T-cell (primary cell): ENCODE measurements at regions of chr13 and their contacts with region 1.

Region 1: GRCh38 chr13:40961826-40962225 is 57.3 kb downstream of the ELF1 start:
- DNase-seq: no peak
- ATAC-seq: peak in 2 of 4 experiments; percentile 6 to 26
- H3K4me3 ChIP-seq: no peak overlapping the region
- H3K4me3 Mint-ChIP-seq: peak overlapping the region; percentile 4 to 67 (median 40)
- H3K27ac ChIP-seq: no peak overlapping the region
- H3K27ac Mint-ChIP-seq: peak overlapping the region; percentile 52 to 76
- H3K4me1 ChIP-seq: peaks cover 28 to 46% of the 10 kb centered on the region in 2 experiments
- H3K4me1 Mint-ChIP-seq: peaks cover 83 to 90% (median 87%) of the 10 kb centered on the region in 3 donors
- H3K27me3 ChIP-seq: no peaks in the 10 kb centered on the region
- H3K27me3 Mint-ChIP-seq: no peaks in the 10 kb centered on the region

Region 2: GRCh38 chr13:39760521-39760920 is 1201.3 kb before region 1 on chr13:
- CTCF ChIA-PET with region 1: no interaction called
- POLR2A ChIA-PET with region 1: interaction called in 1 of 2 experiments, 19 read pairs
- DNase-seq: no peak
- ATAC-seq: no peak
- H3K4me3 ChIP-seq: no peak overlapping the region
- H3K4me3 Mint-ChIP-seq: no peak overlapping the region
- H3K27ac ChIP-seq: no peak overlapping the region
- H3K27ac Mint-ChIP-seq: no peak overlapping the region
- H3K4me1 ChIP-seq: no peaks in the 10 kb centered on the region
- H3K4me1 Mint-ChIP-seq: no peaks in the 10 kb centered on the region
- H3K27me3 ChIP-seq: no peaks in the 10 kb centered on the region
- H3K27me3 Mint-ChIP-seq: no peaks in the 10 kb centered on the region

Region 3: DNA sequence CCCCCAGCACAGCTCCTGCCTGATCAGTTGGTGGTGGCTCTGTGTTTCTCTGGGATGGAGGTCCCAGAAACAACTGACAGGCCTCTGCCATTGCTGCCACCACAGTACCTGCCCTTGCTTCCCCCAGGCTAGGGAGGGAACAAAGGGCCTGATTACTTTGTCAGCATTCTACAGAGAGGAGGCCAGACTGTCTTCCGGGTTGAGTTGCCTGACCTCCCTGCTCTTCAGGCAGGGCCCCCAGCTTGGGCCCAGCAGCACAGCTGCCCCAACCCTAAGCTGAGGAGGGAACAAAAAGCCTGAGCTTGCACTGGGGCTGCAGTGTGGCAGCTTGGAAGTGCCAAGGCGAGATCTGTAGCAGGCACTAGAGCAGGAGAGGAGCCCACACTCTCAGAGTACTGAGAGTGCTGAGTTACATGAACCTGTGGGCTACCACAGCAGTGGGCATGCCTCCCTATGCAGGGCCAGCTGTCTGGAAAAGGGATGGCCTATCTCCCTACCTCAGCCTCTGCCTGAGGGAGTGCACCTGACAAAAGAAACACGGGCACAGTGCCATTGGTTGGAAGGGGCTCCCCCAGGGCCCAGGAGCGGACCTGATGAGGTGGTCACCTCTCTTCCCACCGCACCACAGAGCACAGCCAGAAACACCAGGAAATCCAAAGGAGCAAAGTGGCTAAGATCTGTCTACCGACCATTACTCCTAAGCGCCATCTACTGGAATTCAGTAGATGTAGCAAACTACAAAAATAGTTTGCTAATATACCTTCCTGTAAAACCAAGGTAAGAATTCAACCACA is 148.0 kb before region 1 on chr13:
- CTCF ChIA-PET with region 1: no interaction called
- POLR2A ChIA-PET with region 1: no interaction called
- DNase-seq: peak in 1 of 35 experiments; percentile 39
- ATAC-seq: peak in 2 of 4 experiments; percentile 35 to 45
- H3K4me3 ChIP-seq: no peak overlapping the region
- H3K4me3 Mint-ChIP-seq: no peak overlapping the region
- H3K27ac ChIP-seq: no peak overlapping the region
- H3K27ac Mint-ChIP-seq: no peak overlapping the region
- H3K4me1 ChIP-seq: peaks cover 0 to 3% of the 10 kb centered on the region in 2 experiments
- H3K4me1 Mint-ChIP-seq: peaks cover 0 to 3% (median 0%) of the 10 kb centered on the region in 3 donors
- H3K27me3 ChIP-seq: no peaks in the 10 kb centered on the region
- H3K27me3 Mint-ChIP-seq: no peaks in the 10 kb centered on the region

Region 4: GRCh38 chr13:41231786-41232185 is 270.0 kb after region 1 on chr13:
- CTCF ChIA-PET with region 1: no interaction called
- POLR2A ChIA-PET with region 1: no interaction called
- DNase-seq: peak in 1 of 35 experiments; percentile 8
- ATAC-seq: no peak
- H3K4me3 ChIP-seq: no peak overlapping the region
- H3K4me3 Mint-ChIP-seq: no peak overlapping the region
- H3K27ac ChIP-seq: no peak overlapping the region
- H3K27ac Mint-ChIP-seq: no peak overlapping the region
- H3K4me1 ChIP-seq: peaks cover 0 to 3% of the 10 kb centered on the region in 2 experiments
- H3K4me1 Mint-ChIP-seq: peaks cover 2 to 15% (median 10%) of the 10 kb centered on the region in 3 donors
- H3K27me3 ChIP-seq: no peaks in the 10 kb centered on the region
- H3K27me3 Mint-ChIP-seq: no peaks in the 10 kb centered on the region